ENCODE measurements at regions of chrX and their contacts with region 1.

Region 1: GRCh38 chrX:77975801-77976200 is 6.4 kb upstream of the PGAM4 start:
- DNase-seq: no peak
- H3K4me3 ChIP-seq: no peak overlapping the region
- H3K27ac ChIP-seq: no peak overlapping the region
- H3K4me1 ChIP-seq: no peaks in the 10 kb centered on the region
- H3K27me3 ChIP-seq: no peaks in the 10 kb centered on the region
- CTCF ChIP-seq: no peak

Region 2: DNA sequence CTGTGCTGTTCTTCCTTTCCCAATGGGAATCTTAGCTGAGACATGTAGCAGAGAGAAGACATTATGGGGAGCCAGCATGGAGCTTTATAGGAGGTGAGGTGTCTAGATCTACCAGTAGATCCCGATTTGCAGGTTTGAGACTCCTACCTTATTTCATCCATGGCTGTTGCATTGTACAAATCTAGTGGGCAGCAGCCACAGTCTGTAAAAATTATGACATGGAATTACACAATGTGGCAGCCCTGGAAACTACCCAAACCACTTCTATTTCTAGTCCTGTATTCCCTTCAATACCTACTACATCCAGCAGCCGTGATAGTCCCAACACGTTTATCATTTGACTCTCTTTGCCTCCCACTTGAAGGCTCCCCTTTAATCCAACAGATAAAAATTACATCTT is 57.2 kb before region 1 on chrX:
- CTCF ChIA-PET with region 1: no interaction called
- dilution Hi-C with region 1: no loop called
- in situ Hi-C with region 1: no loop called
- intact Hi-C with region 1: loop called (anchors 2 kb)
- DNase-seq: peak; percentile 28
- H3K4me3 ChIP-seq: no peak overlapping the region
- H3K27ac ChIP-seq: no peak overlapping the region
- H3K4me1 ChIP-seq: no peaks in the 10 kb centered on the region
- H3K27me3 ChIP-seq: no peaks in the 10 kb centered on the region
- CTCF ChIP-seq: no peak

Measured in mammary epithelial cell (primary cell).